Heart left ventricle (tissue), 16 donors: ENCODE measurements at regions of chr14 and their contacts with region 1.

Region 1: GRCh38 chr14:105340821-105341733 is 26.5 kb downstream of the PACS2 start:
- DNase-seq: no peak
- ATAC-seq: peak; percentile 5 to 21 (median 16)
- H3K4me3 ChIP-seq: no peak overlapping the region
- H3K27ac ChIP-seq: peak overlapping the region in 11 of 12 donors; percentile 35 to 80 (median 54)
- H3K4me1 ChIP-seq: peaks cover 5 to 78% (median 42%) of the 10 kb centered on the region in 12 donors
- H3K27me3 ChIP-seq: no peaks in the 10 kb centered on the region
- CTCF ChIP-seq: no peak
- POLR2A ChIP-seq: no peak

Region 2: GRCh38 chr14:104677512-104678332 is 663.4 kb before region 1 on chr14:
- intact Hi-C with region 1: no loop called
- DNase-seq: peak; percentile 84 to 89 (median 86)
- ATAC-seq: peak; percentile 51 to 81 (median 76)
- H3K4me3 ChIP-seq: peak overlapping the region; percentile 9 to 76 (median 54)
- H3K27ac ChIP-seq: peak overlapping the region; percentile 71 to 97 (median 90)
- H3K4me1 ChIP-seq: peaks cover 31 to 62% (median 56%) of the 10 kb centered on the region in 12 donors
- H3K27me3 ChIP-seq: no peaks in the 10 kb centered on the region
- CTCF ChIP-seq: no peak
- POLR2A ChIP-seq: no peak

Region 3: GRCh38 chr14:105267820-105268548 is 73.1 kb before region 1 on chr14:
- intact Hi-C with region 1: loop called in 1 of 10 experiments (anchors 10 kb)
- DNase-seq: no peak
- ATAC-seq: peak in 3 of 4 donors; percentile 74 to 79 (median 75)
- H3K4me3 ChIP-seq: no peak overlapping the region
- H3K27ac ChIP-seq: no peak overlapping the region
- H3K4me1 ChIP-seq: peaks cover 0 to 10% (median 0%) of the 10 kb centered on the region in 12 donors
- H3K27me3 ChIP-seq: no peaks in the 10 kb centered on the region
- CTCF ChIP-seq: peak in 6 of 12 donors; percentile 12 to 22 (median 19)
- POLR2A ChIP-seq: no peak